ENCODE measurements at regions of chr6 and their contacts with region 1.

Region 1: DNA sequence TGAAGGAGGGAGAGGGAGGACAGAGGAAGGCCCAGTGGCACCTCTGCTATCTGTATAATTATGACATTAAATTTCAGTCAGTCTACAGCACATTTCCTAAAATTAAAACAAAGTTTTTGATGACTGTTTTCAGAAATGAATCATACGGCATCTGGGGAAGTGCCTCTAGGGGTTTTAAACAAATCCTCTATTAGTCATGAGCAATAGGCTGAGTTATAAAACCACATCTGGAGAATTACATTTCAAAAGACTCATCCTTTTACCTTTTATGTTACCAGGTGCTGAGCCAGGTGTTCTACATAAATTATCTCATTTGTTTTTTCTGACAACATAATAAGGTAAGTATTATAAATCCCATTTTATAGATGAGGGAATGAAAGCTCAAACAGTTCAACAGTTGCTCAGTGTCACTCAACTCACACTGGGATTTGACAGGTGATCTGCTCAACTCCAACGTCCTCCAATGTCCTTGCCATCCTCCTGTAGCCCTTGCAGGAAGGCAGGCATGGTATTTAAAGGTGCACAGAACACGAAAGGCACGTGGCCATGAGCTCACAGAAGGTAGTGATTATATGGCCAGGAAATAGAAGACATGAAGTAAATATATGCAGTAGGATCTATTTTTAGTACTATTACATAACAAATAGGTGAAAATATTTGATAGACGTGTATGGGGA is 184.2 kb upstream of the MAN1A1 start:
- DNase-seq: peak; percentile 85
- H3K4me3 ChIP-seq: peak overlapping the region; percentile 53
- H3K27ac ChIP-seq: peak overlapping the region; percentile 99
- H3K4me1 ChIP-seq: peaks cover 73% of the 10 kb centered on the region
- CTCF ChIP-seq: no peak

Region 2: GRCh38 chr6:119467488-119468081 is 66.2 kb before region 1 on chr6:
- CTCF ChIA-PET with region 1: no interaction called
- POLR2A ChIA-PET with region 1: no interaction called
- intact Hi-C with region 1: no loop called
- DNase-seq: no peak
- H3K4me3 ChIP-seq: peak overlapping the region; percentile 20
- H3K27ac ChIP-seq: no peak overlapping the region
- H3K4me1 ChIP-seq: peaks cover 16% of the 10 kb centered on the region
- CTCF ChIP-seq: no peak

Region 3: DNA sequence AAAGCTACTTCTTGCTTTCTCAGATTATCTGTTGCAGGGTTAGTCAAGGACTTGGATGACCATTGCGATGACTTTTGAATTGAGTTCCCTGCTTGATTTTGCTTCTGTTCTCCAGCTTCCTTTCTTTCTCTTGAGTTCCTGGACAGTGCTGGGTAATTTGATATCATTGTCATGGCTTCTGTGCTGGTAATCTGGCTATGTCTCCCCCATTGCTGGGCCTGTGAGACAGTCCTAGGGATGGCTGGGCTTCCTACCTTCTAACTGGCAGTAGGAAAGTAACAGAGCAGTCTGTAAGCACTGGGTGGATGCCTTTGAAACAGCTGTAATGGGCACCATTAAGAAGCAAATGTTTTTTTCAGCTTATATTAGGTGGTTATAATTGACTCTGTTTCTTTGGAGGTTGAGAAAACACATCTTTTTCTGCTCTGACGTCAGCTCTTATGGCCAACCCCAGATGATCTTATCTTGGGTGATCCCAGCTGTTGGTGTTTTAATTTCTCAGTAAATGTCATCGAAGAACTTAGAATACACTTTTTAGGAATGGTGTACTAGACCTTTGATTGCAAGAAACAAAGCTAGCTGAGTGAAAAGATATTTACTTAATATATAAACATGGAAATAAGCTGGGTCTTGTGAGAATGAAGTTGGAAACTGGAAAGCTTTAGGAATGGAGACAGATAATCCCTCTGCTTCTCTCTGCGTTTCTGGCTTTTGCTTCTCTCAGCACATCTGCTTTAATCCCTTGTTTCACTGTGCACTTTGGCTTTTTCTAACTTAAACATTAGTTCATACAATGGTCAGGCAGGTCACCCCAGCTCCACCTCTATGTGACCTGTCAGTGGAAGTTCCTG is 10.8 kb after region 1 on chr6:
- CTCF ChIA-PET with region 1: interaction called, 3 read pairs
- POLR2A ChIA-PET with region 1: interaction called, 16 read pairs
- intact Hi-C with region 1: no loop called
- DNase-seq: no peak
- H3K4me3 ChIP-seq: no peak overlapping the region
- H3K27ac ChIP-seq: no peak overlapping the region
- H3K4me1 ChIP-seq: no peaks in the 10 kb centered on the region
- CTCF ChIP-seq: no peak

Region 4: GRCh38 chr6:119568580-119568979 is 34.8 kb after region 1 on chr6:
- CTCF ChIA-PET with region 1: no interaction called
- POLR2A ChIA-PET with region 1: interaction called, 5 read pairs
- intact Hi-C with region 1: loop called (anchors 1 kb)
- DNase-seq: no peak
- H3K4me3 ChIP-seq: no peak overlapping the region
- H3K27ac ChIP-seq: no peak overlapping the region
- H3K4me1 ChIP-seq: no peaks in the 10 kb centered on the region
- CTCF ChIP-seq: no peak